ENCODE measurements at regions of chr19 and their contacts with region 1.

Region 1: DNA sequence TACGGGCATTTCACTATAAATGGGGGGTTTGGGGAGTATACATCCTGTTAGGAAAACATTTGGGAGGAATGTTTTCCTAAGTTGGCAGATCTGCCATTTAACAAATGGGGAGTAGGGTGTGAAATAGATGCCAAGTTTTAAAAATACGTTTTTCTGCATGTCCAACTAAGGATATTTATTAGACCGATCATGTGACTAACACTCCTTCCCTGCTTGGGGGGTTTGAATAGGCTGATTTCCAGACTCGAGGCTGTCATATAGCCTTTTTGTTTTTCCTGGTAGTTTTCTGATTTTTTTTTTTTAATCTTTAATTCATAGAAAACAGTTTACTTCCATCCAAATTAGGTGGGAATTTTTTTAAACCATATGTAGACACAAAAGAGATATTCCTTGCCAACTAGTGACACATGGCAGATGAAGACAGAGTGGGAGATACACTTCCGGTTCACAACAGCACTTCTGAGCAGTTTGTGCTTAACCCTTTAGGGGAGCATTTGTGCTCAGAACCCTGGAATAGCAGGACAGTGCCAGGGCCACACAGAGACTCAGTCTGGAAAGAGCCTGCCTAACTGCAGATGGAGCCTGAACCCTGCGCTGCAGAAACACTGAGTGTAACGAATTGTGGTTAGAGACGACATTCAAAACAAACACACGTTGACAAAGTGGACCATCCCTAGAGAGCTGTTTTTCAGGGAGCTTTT is 5.6 kb upstream of the GATAD2A start:
- DNase-seq: no peak
- H3K4me3 Mint-ChIP-seq: no peak overlapping the region
- H3K27ac Mint-ChIP-seq: no peak overlapping the region
- H3K4me1 Mint-ChIP-seq: peaks cover 27% of the 10 kb centered on the region
- H3K27me3 Mint-ChIP-seq: no peaks in the 10 kb centered on the region

Region 2: DNA sequence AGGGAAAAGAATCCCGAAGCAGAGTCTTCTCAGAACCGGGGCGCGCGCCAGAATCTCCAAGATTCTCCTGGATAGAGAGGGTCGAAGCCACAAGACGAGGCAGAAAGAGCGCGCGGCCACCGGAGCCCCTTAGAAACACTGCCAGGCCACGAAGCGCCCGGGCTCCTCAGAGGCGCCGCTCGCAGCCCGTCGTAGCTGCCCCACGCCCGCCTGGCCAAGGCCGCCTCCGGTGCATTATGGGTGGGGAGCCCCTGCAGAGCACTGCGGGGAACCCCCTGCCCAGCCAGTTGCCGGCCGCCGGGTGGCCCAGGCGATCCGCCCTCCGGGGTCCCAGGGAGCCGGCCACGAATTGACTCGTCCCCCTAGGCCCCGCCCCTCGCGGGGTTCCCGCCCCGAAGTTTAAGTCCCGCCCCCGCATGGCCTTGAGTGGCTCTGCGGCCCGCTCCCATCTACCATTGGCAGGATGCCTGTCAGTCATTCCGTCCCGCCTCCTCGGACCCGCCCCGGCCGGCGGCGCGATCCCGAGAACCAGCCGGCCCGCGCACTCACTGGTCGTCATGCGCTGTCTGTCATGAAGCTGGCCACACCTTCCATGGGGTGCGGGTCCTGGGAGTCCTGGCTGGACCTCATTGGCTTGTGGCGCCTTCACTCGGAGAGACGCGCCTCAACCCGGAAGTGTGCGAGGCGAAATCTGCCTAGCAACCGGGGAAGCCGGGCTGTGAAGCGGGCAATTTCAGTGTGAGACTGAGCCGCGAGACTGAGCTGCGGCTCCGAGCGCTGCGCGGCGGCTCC is 14.6 kb before region 1 on chr19:
- intact Hi-C with region 1: loop called (anchors 1 kb)
- DNase-seq: peak; percentile 100
- H3K4me3 Mint-ChIP-seq: peak overlapping the region; percentile 87
- H3K27ac Mint-ChIP-seq: peak overlapping the region; percentile 92
- H3K4me1 Mint-ChIP-seq: peaks cover 45% of the 10 kb centered on the region
- H3K27me3 Mint-ChIP-seq: peaks cover 2% of the 10 kb centered on the region

Region 3: DNA sequence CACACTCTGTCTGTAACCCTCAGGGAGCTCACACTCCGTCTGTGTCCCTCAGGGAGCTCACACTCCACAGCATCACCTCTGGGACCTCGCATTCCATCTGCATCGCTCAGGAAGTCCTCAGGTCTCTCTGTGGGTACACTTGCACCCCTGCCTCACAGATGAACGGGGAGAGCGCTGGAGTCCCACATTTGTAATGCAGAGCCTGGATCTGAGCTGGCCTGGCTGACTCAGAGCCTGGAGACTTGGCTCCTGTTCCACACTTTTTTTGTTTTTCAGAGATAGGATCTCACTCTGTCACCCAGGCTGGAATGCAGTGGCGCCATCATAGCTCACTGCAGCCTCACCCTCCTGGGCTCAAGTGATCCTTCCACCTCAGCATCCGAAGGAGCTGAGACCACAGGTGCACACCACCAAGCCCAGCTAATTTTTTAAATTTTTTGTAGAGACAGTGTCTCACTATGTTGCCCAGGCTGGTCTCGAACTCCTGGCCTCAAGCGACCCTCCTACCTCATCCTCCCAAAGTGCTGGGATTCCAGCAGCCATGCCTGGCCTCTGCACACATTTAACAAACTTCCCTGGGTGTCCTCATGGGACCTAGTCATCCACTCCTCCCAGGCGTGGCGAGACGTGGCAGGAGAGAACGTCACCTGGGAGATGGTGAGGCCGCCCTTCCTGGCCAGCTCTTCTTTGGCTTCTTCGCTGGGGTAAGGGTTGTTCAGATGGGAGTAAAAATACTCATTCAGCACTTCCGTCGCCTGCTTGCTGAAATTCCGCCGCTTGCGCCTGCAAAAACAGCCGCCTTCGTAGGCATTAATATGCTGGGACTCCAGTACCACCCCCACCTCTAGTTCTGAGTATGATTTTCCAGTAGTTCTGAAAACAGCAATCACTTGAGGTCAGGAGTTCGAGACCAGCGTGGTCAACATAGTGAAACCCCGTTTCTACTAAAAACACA is 169.2 kb after region 1 on chr19:
- intact Hi-C with region 1: no loop called
- DNase-seq: no peak
- H3K4me3 Mint-ChIP-seq: no peak overlapping the region
- H3K27ac Mint-ChIP-seq: peak overlapping the region; percentile 84
- H3K4me1 Mint-ChIP-seq: peaks cover 5% of the 10 kb centered on the region
- H3K27me3 Mint-ChIP-seq: no peaks in the 10 kb centered on the region